ENCODE measurements at regions of chr11 and their contacts with region 1.

Region 1: GRCh38 chr11:57426929-57427726 is at the start of gene SLC43A3:
- DNase-seq: peak; percentile 84
- H3K4me3 Mint-ChIP-seq: peak within 1 kb of the TSS; percentile 95
- H3K27ac Mint-ChIP-seq: peak within 1 kb of the TSS; percentile 96
- H3K4me1 Mint-ChIP-seq: peaks cover 33% of the 10 kb centered on the region
- H3K27me3 Mint-ChIP-seq: no peaks in the 10 kb centered on the region
- total RNA-seq, gene SLC43A3: 116 to 117 TPM

Region 2: GRCh38 chr11:56474729-56475235 is 952.3 kb before region 1 on chr11:
- CTCF ChIA-PET with region 1: no interaction called
- intact Hi-C with region 1: no loop called
- DNase-seq: no peak
- H3K4me3 Mint-ChIP-seq: no peak overlapping the region
- H3K27ac Mint-ChIP-seq: no peak overlapping the region
- H3K4me1 Mint-ChIP-seq: no peaks in the 10 kb centered on the region
- H3K27me3 Mint-ChIP-seq: no peaks in the 10 kb centered on the region

Region 3: DNA sequence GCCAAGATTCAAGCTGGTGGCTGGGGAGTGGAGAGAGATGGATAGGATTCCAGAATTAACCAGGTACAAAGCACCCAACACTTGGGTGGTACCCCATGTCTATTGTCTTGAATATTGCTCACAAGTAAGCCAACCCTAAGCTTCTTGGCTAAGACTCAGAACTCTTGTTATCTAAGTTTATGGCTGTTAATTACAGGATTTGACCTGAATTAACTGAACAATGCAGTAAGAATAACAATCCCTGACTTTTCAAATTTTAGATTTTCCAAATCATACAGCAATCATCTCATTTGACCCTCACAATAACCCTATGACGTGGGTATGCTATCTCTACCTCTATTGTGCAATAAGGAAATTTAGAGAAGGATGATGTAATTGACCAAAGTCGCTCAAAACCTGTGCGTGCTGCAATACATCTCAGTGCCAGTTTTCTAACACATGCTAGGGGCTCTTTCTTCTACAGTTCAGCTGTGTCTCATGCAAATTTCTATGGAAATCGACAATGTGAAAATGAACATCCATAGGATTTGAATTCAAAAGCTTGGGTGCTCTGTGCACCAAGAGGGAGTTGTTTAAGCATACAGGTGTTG is 150.1 kb before region 1 on chr11:
- CTCF ChIA-PET with region 1: no interaction called
- intact Hi-C with region 1: no loop called
- DNase-seq: no peak
- H3K4me3 Mint-ChIP-seq: no peak overlapping the region
- H3K27ac Mint-ChIP-seq: no peak overlapping the region
- H3K4me1 Mint-ChIP-seq: peaks cover 5% of the 10 kb centered on the region
- H3K27me3 Mint-ChIP-seq: peaks cover 23% of the 10 kb centered on the region

Region 4: DNA sequence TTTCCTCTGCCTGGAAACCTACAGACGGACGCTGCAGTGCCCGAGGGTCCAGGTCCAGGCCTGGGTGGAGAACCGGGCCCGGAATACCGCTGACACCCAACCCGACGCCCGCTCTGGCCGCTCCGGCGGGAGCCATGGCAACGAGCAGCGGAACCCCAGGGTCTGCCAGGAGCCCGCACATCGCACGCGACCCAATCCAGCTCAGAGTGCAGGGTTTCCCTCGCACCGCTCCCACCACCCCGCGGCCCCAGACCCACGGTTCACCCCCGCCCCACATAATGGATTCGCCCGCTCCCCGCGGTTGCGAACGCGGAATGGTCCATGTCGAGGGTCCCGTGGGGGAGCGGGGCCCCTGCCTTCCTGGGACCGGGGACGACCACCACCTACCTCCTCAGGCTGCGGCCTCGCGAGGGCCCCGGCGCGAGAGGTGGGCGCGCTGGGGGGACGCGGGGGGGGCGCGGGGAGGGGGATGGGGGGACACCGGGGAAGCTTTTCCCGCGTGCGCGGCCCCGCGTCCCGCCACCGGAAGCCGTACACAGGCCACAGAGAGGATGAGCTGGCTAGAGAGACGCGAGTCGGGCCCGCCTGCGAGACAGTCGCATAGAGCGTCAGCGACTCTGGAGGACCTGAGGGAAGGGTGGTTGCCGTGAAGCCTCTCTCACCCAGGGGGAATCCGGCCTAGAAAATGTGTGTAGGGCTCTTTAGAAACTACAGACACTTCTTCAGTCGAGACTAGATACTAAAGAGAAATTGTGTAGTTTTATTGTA is 91.6 kb before region 1 on chr11 and contains the start of gene SSRP1:
- CTCF ChIA-PET with region 1: no interaction called
- intact Hi-C with region 1: loop called (anchors 1 kb)
- DNase-seq: peak; percentile 93
- H3K4me3 Mint-ChIP-seq: peak within 1 kb of the TSS; percentile 91
- H3K27ac Mint-ChIP-seq: peak within 1 kb of the TSS; percentile 99
- H3K4me1 Mint-ChIP-seq: peaks cover 41% of the 10 kb centered on the region
- H3K27me3 Mint-ChIP-seq: no peaks in the 10 kb centered on the region
- total RNA-seq, gene SSRP1: 304 to 322 TPM

Region 5: DNA sequence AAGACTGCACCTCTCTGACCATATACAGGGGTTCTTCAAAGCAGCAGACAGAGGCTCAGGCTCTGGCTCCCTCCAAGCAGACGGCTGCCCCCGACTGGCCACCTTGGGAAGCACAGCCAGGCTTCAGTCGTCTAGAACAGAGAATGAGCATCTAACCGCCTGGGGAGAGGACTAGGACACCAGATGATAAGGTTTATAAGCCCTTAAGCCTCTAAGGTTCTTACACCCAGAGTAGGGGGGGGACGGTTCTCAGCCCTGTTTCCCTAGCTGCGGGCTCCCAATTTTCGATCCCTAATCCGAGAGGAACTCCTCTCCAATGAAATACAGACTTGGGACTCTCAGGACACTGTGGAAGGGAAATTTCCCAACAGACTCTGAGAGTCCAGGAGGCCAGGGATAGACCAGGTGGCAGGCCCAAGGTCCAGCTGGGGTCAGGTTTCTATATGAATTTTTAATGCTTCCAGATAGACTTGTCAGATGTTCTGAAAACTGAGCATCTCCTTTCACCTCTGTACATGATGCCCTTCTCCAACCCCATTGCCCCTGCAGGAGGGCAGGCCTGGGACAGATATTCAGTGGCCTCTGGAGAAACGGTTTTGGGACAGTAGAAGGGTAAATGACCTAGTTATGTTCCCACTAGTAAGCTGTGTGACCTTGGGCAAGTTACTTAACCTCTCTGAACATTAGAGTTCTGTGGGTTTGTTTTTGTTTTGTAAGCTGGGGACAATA is 53.4 kb after region 1 on chr11:
- CTCF ChIA-PET with region 1: interaction called, 3 read pairs
- intact Hi-C with region 1: loop called (anchors 1 kb)
- DNase-seq: peak; percentile 87
- H3K4me3 Mint-ChIP-seq: no peak overlapping the region
- H3K27ac Mint-ChIP-seq: no peak overlapping the region
- H3K4me1 Mint-ChIP-seq: peaks cover 22% of the 10 kb centered on the region
- H3K27me3 Mint-ChIP-seq: peaks cover 16% of the 10 kb centered on the region

Region 6: GRCh38 chr11:57667736-57668435 is 240.8 kb after region 1 on chr11 and contains the start of gene ZDHHC5:
- CTCF ChIA-PET with region 1: no interaction called
- intact Hi-C with region 1: loop called (anchors 2 kb)
- DNase-seq: peak; percentile 99
- H3K4me3 Mint-ChIP-seq: peak within 1 kb of the TSS; percentile 91
- H3K27ac Mint-ChIP-seq: peak within 1 kb of the TSS; percentile 97
- H3K4me1 Mint-ChIP-seq: peaks cover 43% of the 10 kb centered on the region
- H3K27me3 Mint-ChIP-seq: no peaks in the 10 kb centered on the region
- total RNA-seq, gene ZDHHC5: 38.5 to 46.6 TPM

Region 7: DNA sequence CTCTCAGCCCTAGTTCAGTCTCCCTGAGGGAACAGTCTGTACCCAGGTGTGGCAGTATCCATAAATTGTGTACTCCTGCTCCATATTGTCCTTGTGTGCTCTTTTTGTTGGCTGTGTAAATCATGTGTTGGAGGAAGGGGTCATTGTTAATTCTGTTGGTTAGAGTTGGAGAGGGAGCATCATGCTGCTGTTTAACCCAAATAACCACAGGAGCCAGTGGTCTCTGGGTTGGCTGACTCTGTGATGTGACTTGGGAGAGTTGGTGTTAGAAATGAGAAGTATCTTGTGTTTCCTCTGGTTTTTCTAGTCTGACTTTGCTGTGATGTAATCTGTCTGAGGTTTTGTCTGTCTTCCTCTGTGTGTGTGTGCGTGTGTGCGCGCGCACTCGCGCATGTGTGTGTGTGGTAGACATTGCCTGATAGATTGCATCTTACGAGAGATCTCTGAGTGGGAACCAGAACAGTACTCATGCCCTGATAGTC is 365.0 kb after region 1 on chr11:
- CTCF ChIA-PET with region 1: no interaction called
- intact Hi-C with region 1: loop called (anchors 2 kb)
- DNase-seq: peak; percentile 87
- H3K4me3 Mint-ChIP-seq: peak overlapping the region; percentile 59
- H3K27ac Mint-ChIP-seq: peak overlapping the region; percentile 94
- H3K4me1 Mint-ChIP-seq: peaks cover 34% of the 10 kb centered on the region
- H3K27me3 Mint-ChIP-seq: no peaks in the 10 kb centered on the region